ENCODE measurements at regions of chr18 and their contacts with region 1.

Region 1: GRCh38 chr18:46660955-46661749 is 4.1 kb upstream of the LOXHD1 start:
- DNase-seq: no peak
- ATAC-seq: no peak
- H3K4me3 Mint-ChIP-seq: no peak overlapping the region
- H3K27ac Mint-ChIP-seq: no peak overlapping the region
- H3K4me1 Mint-ChIP-seq: no peaks in the 10 kb centered on the region
- H3K27me3 Mint-ChIP-seq: no peaks in the 10 kb centered on the region
- CTCF ChIP-seq: no peak

Region 2: GRCh38 chr18:46148810-46149209 is 512.3 kb before region 1 on chr18:
- CTCF ChIA-PET with region 1: interaction called, 61 read pairs
- POLR2A ChIA-PET with region 1: no interaction called
- intact Hi-C with region 1: loop called (anchors 5 kb)
- DNase-seq: peak; percentile 73
- ATAC-seq: peak; percentile 63
- H3K4me3 Mint-ChIP-seq: no peak overlapping the region
- H3K27ac Mint-ChIP-seq: peak overlapping the region; percentile 65
- H3K4me1 Mint-ChIP-seq: peaks cover 30% of the 10 kb centered on the region
- H3K27me3 Mint-ChIP-seq: no peaks in the 10 kb centered on the region
- CTCF ChIP-seq: peak; percentile 76

Region 3: GRCh38 chr18:46220116-46220515 is 441.0 kb before region 1 on chr18:
- CTCF ChIA-PET with region 1: interaction called, 11 read pairs
- POLR2A ChIA-PET with region 1: no interaction called
- intact Hi-C with region 1: no loop called
- DNase-seq: no peak
- ATAC-seq: no peak
- H3K4me3 Mint-ChIP-seq: no peak overlapping the region
- H3K27ac Mint-ChIP-seq: no peak overlapping the region
- H3K4me1 Mint-ChIP-seq: peaks cover 82% of the 10 kb centered on the region
- H3K27me3 Mint-ChIP-seq: no peaks in the 10 kb centered on the region
- CTCF ChIP-seq: no peak

Region 4: DNA sequence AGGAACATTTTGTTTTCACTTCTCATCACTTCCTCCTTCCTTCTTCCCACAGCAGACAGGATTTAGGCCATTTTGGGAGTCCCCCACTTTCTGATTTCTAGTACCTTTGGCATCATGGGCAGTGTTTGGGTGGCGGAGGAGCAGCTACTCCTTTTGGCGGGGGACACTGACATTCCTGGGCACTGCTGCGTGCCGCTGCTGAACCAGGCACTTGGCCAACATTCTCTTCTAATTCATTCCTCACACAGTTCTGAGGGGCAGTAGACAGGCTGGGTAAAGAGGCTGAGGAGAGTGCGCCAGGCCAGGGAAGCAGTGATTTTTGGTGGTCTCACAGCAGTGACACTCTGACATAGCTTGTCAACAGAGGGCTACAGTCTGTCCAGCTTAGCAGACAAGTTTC is 274.4 kb before region 1 on chr18:
- CTCF ChIA-PET with region 1: interaction called, 17 read pairs
- POLR2A ChIA-PET with region 1: no interaction called
- intact Hi-C with region 1: no loop called
- DNase-seq: no peak
- ATAC-seq: no peak
- H3K4me3 Mint-ChIP-seq: no peak overlapping the region
- H3K27ac Mint-ChIP-seq: no peak overlapping the region
- H3K4me1 Mint-ChIP-seq: no peaks in the 10 kb centered on the region
- H3K27me3 Mint-ChIP-seq: no peaks in the 10 kb centered on the region
- CTCF ChIP-seq: no peak

Region 5: GRCh38 chr18:46488471-46489213 is 172.5 kb before region 1 on chr18:
- CTCF ChIA-PET with region 1: interaction called, 10 read pairs
- POLR2A ChIA-PET with region 1: no interaction called
- intact Hi-C with region 1: no loop called
- DNase-seq: no peak
- ATAC-seq: no peak
- H3K4me3 Mint-ChIP-seq: no peak overlapping the region
- H3K27ac Mint-ChIP-seq: no peak overlapping the region
- H3K4me1 Mint-ChIP-seq: no peaks in the 10 kb centered on the region
- H3K27me3 Mint-ChIP-seq: peaks cover 3% of the 10 kb centered on the region
- CTCF ChIP-seq: no peak

Region 6: GRCh38 chr18:46555724-46556123 is 105.4 kb before region 1 on chr18:
- CTCF ChIA-PET with region 1: interaction called, 42 read pairs
- POLR2A ChIA-PET with region 1: no interaction called
- intact Hi-C with region 1: loop called (anchors 10 kb)
- DNase-seq: peak; percentile 26
- ATAC-seq: peak; percentile 47
- H3K4me3 Mint-ChIP-seq: no peak overlapping the region
- H3K27ac Mint-ChIP-seq: no peak overlapping the region
- H3K4me1 Mint-ChIP-seq: no peaks in the 10 kb centered on the region
- H3K27me3 Mint-ChIP-seq: no peaks in the 10 kb centered on the region
- CTCF ChIP-seq: peak; percentile 61

Region 7: GRCh38 chr18:46649071-46649862 is 11.9 kb before region 1 on chr18:
- CTCF ChIA-PET with region 1: interaction called, 29 read pairs
- POLR2A ChIA-PET with region 1: no interaction called
- intact Hi-C with region 1: no loop called
- DNase-seq: no peak
- ATAC-seq: no peak
- H3K4me3 Mint-ChIP-seq: no peak overlapping the region
- H3K27ac Mint-ChIP-seq: no peak overlapping the region
- H3K4me1 Mint-ChIP-seq: no peaks in the 10 kb centered on the region
- H3K27me3 Mint-ChIP-seq: no peaks in the 10 kb centered on the region
- CTCF ChIP-seq: no peak

Region 8: DNA sequence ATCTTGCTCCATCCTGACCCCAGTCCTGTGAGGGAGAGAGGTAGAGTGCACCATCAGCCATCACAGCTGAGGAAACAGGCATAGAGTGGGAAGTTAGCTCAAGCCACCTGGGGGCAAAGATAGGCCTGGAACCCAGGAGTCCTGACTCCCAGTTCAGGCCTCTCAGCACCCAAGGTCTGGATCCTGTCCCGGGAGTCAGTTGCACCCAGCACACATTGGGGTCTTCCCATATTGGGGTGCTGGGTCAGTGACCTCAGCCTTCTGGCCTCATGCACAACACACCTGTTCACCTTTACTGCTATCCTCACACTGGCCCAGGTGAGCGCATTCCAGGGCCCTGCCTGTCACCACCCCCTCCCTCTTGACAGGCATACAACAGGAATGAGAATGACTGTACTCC is 71.0 kb after region 1 on chr18:
- CTCF ChIA-PET with region 1: no interaction called
- POLR2A ChIA-PET with region 1: no interaction called
- intact Hi-C with region 1: no loop called
- DNase-seq: no peak
- ATAC-seq: no peak
- H3K4me3 Mint-ChIP-seq: no peak overlapping the region
- H3K27ac Mint-ChIP-seq: no peak overlapping the region
- H3K4me1 Mint-ChIP-seq: no peaks in the 10 kb centered on the region
- H3K27me3 Mint-ChIP-seq: peaks cover 8% of the 10 kb centered on the region
- CTCF ChIP-seq: no peak